ENCODE measurements at regions of chr11 and their contacts with region 1.

Region 1: GRCh38 chr11:18321980-18322711 is at the starts of genes GTF2H1 and HPS5:
- DNase-seq: peak; percentile 85
- H3K4me3 ChIP-seq: peak within 1 kb of the TSS; percentile 80 to 96 (median 88)
- H3K27ac ChIP-seq: peak within 1 kb of the TSS; percentile 96 to 99 (median 98)
- H3K4me1 ChIP-seq: peaks cover 22 to 70% (median 31%) of the 10 kb centered on the region in 3 donors
- H3K27me3 ChIP-seq: no peaks in the 10 kb centered on the region
- CTCF ChIP-seq: peak in 3 of 6 experiments; percentile 7 to 25 (median 10)
- POLR2A ChIP-seq: peak in 3 of 4 donors; percentile 70 to 96 (median 93)
- total RNA-seq, gene GTF2H1: 33.5 to 77.4 (median 54.8) TPM
- total RNA-seq, gene HPS5: 10.8 to 21.2 (median 15.5) TPM

Region 2: DNA sequence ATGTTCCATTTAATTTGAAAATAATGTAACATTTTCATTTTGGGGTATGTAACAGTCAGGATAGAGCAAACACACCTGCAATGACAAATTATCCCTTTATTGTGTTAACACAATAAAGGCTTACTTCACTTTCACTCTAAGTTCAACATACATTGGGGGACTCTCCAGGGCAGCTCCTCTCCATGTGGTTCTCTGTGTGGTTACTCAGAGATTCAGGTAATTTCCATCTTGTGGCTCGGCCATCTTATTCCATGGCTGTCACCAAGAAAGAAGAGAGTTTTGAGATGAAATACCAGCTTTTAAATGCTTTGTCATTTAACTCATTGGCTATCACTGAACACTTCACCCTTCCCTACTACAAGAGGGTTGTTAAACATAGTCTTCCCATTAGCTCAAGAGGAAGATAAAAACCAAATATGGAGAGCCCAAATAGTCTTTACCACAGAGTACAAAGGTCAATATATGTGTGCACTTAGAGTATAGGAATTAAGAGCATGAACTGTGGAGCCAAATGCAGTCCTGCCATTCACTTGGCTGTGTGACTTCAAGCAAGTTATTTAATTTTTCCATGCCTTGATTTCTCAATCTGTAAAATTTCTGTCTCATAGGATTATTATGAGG is 265.5 kb before region 1 on chr11:
- intact Hi-C with region 1: no loop called
- DNase-seq: no peak
- H3K4me3 ChIP-seq: no peak overlapping the region
- H3K27ac ChIP-seq: no peak overlapping the region
- H3K4me1 ChIP-seq: no peaks in the 10 kb centered on the region
- H3K27me3 ChIP-seq: no peaks in the 10 kb centered on the region
- CTCF ChIP-seq: no peak
- POLR2A ChIP-seq: no peak

Region 3: GRCh38 chr11:18395735-18396504 is 73.8 kb after region 1 on chr11:
- intact Hi-C with region 1: loop called (anchors 10 kb)
- DNase-seq: peak; percentile 69
- H3K4me3 ChIP-seq: peak overlapping the region; percentile 88 to 92 (median 90)
- H3K27ac ChIP-seq: peak overlapping the region; percentile 98 to 99 (median 98)
- H3K4me1 ChIP-seq: peaks cover 14 to 48% (median 20%) of the 10 kb centered on the region in 3 donors
- H3K27me3 ChIP-seq: no peaks in the 10 kb centered on the region
- CTCF ChIP-seq: peak in 1 of 6 experiments; percentile 36
- POLR2A ChIP-seq: peak in 3 of 4 donors; percentile 80 to 86 (median 85)